IMR-90 (cell line): ENCODE measurements at regions of chr17 and their contacts with region 1.

Region 1: GRCh38 chr17:41930009-41930832 is at the start of gene ODAD4:
- DNase-seq: peak; percentile 98
- ATAC-seq: peak; percentile 100
- H3K4me3 ChIP-seq: peak within 1 kb of the TSS; percentile 46
- H3K27ac ChIP-seq: peak within 1 kb of the TSS; percentile 69
- H3K4me1 ChIP-seq: no peaks in the 10 kb centered on the region; the same call in 1 of the 2 replicates
- H3K27me3 ChIP-seq: no peaks in the 10 kb centered on the region
- CTCF ChIP-seq: peak; percentile 65
- POLR2A ChIP-seq: peak; percentile 72
- RAD21 ChIP-seq: peak; percentile 58
- total RNA-seq, gene ODAD4: 0.54 and 0.56 TPM in 2 replicates

Region 2: GRCh38 chr17:41824086-41824485 is 106.1 kb before region 1 on chr17:
- CTCF ChIA-PET with region 1: no interaction called
- POLR2A ChIA-PET with region 1: interaction called, 22 read pairs
- dilution Hi-C with region 1: no loop called
- in situ Hi-C with region 1: no loop called
- intact Hi-C with region 1: no loop called
- DNase-seq: no peak
- ATAC-seq: no peak
- H3K4me3 ChIP-seq: no peak overlapping the region
- H3K27ac ChIP-seq: no peak overlapping the region
- H3K4me1 ChIP-seq: peaks cover 2% of the 10 kb centered on the region; the same call in 1 of the 2 replicates
- H3K27me3 ChIP-seq: no peaks in the 10 kb centered on the region
- CTCF ChIP-seq: no peak
- POLR2A ChIP-seq: no peak
- RAD21 ChIP-seq: no peak

Region 3: DNA sequence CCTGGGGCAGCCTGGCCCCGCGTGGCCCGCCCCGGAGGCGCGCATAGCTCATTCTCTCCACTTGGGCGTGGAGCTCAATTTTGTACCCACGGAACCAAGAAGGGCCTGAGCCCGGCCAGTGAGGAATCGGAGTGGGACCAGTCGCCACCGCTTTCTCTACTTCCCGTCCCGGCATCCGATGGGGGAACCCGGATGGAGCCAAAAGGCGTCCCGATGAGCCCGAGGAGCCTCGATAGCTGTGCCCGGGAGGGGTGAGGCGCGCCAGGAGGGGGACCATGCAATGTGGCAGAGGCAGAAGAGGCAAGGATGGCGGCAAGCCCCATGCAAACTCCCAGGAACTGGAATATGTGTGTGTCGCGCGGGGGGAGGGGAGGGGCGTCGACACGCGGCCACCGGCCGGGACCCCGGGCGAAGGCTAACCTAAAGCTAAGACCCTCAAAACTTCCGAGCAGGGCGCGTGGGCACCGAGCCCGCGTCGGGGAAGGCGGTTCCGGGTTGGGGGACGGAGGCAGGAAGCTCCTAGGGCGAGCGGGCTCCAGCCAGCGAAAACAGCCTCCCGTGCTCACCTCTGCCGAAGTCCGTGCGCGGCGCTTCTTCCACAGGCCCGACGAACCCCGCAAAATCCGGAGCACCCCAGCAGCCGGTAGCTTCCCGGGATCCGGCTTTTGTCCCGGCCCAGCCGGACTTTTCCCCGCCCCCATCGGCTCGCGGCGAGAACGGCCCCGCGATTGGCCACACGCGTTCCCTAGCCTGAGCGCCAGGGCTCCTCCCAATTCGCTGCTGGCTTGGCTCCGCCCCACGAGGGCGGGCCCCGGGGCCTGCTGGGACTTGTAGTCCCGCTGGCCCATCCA is 11.7 kb before region 1 on chr17 and contains the start of gene ACLY:
- CTCF ChIA-PET with region 1: interaction called, 5 read pairs
- POLR2A ChIA-PET with region 1: interaction called, 7 read pairs
- dilution Hi-C with region 1: no loop called
- in situ Hi-C with region 1: no loop called
- intact Hi-C with region 1: loop called (anchors 1 kb)
- DNase-seq: peak; percentile 95
- ATAC-seq: peak; percentile 96
- H3K4me3 ChIP-seq: peak within 1 kb of the TSS; percentile 72
- H3K27ac ChIP-seq: peak within 1 kb of the TSS; percentile 73
- H3K4me1 ChIP-seq: peaks cover 27% of the 10 kb centered on the region
- H3K27me3 ChIP-seq: no peaks in the 10 kb centered on the region
- CTCF ChIP-seq: no peak
- POLR2A ChIP-seq: peak; percentile 96
- RAD21 ChIP-seq: no peak
- total RNA-seq, gene ACLY: 228 and 230 TPM in 2 replicates